ENCODE measurements at regions of chr6 and their contacts with region 1.

Region 1: GRCh38 chr6:72111611-72112010 is 225.3 kb downstream of the RIMS1 start:
- DNase-seq: no peak
- ATAC-seq: no peak
- H3K4me3 Mint-ChIP-seq: no peak overlapping the region
- H3K27ac Mint-ChIP-seq: no peak overlapping the region
- H3K4me1 Mint-ChIP-seq: no peaks in the 10 kb centered on the region
- H3K27me3 Mint-ChIP-seq: no peaks in the 10 kb centered on the region

Region 2: GRCh38 chr6:71211799-71212198 is 899.8 kb before region 1 on chr6:
- CTCF ChIA-PET with region 1: no interaction called
- POLR2A ChIA-PET with region 1: no interaction called
- intact Hi-C with region 1: no loop called
- DNase-seq: no peak
- ATAC-seq: no peak
- H3K4me3 Mint-ChIP-seq: no peak overlapping the region
- H3K27ac Mint-ChIP-seq: no peak overlapping the region
- H3K4me1 Mint-ChIP-seq: no peaks in the 10 kb centered on the region
- H3K27me3 Mint-ChIP-seq: no peaks in the 10 kb centered on the region

Region 3: GRCh38 chr6:71982389-71982788 is 129.2 kb before region 1 on chr6:
- CTCF ChIA-PET with region 1: no interaction called
- POLR2A ChIA-PET with region 1: no interaction called
- intact Hi-C with region 1: loop called in 1 of 2 experiments (anchors 10 kb)
- DNase-seq: no peak
- ATAC-seq: peak; percentile 16
- H3K4me3 Mint-ChIP-seq: no peak overlapping the region
- H3K27ac Mint-ChIP-seq: no peak overlapping the region
- H3K4me1 Mint-ChIP-seq: no peaks in the 10 kb centered on the region
- H3K27me3 Mint-ChIP-seq: no peaks in the 10 kb centered on the region